Activated CD4-positive, alpha-beta T cell treated with anti-CD3 and anti-CD28 coated beads, Interleukin-2, amount 10 ng/mL, durations not matched to agents 7 days and 5 days (primary cell): ENCODE measurements at regions of chr1 and their contacts with region 1.

Region 1: GRCh38 chr1:26233903-26234643 is at the start of gene CEP85:
- DNase-seq: peak; percentile 98
- H3K4me3 Mint-ChIP-seq: peak within 1 kb of the TSS; percentile 92
- H3K27ac Mint-ChIP-seq: peak within 1 kb of the TSS; percentile 97
- H3K4me1 Mint-ChIP-seq: peaks cover 36% of the 10 kb centered on the region
- H3K27me3 Mint-ChIP-seq: no peaks in the 10 kb centered on the region
- total RNA-seq, gene CEP85: 46.9 to 49.0 TPM

Region 2: DNA sequence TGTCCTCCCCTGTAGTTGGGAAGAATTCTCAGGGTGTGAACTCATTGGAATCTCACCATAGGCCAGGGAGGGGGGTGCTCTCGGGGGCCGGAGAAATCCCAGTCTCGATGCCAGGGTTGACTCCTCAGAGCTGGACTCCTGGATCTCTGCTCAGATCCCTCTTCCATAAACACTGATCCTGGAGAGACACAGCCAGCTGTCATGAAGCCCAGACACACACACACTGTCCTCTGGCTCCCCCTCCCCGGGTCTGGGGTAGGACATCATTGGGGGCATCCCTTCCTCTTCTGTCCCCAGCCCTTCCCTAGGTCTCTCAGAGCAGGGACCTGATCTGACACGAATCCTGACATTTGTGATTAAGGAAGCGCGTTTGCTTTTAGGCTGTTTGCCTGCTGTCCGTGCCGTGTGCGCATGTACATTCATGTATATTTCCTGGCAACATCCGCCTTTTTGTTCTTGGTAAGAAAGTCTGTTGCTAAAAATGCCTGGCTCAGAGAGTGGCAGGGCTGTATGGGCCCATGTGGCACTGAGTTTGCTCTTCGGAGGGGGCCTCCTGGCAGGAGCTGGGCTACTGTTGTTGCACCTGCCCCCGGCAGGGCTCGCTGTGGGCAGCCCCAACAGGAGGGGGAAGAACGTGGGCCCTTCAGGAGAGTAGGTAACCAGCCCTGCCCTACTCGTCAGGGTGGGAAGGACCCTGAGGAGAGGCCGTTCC is 479.4 kb before region 1 on chr1:
- CTCF ChIA-PET with region 1: no interaction called
- POLR2A ChIA-PET with region 1: no interaction called
- DNase-seq: no peak
- H3K4me3 Mint-ChIP-seq: no peak overlapping the region
- H3K27ac Mint-ChIP-seq: peak overlapping the region; percentile 75
- H3K4me1 Mint-ChIP-seq: peaks cover 35% of the 10 kb centered on the region
- H3K27me3 Mint-ChIP-seq: no peaks in the 10 kb centered on the region

Region 3: GRCh38 chr1:26102526-26102925 is 131.5 kb before region 1 on chr1:
- CTCF ChIA-PET with region 1: interaction called, 10 read pairs
- POLR2A ChIA-PET with region 1: no interaction called
- DNase-seq: no peak
- H3K4me3 Mint-ChIP-seq: no peak overlapping the region
- H3K27ac Mint-ChIP-seq: no peak overlapping the region
- H3K4me1 Mint-ChIP-seq: peaks cover 18% of the 10 kb centered on the region
- H3K27me3 Mint-ChIP-seq: peaks cover 11% of the 10 kb centered on the region

Region 4: DNA sequence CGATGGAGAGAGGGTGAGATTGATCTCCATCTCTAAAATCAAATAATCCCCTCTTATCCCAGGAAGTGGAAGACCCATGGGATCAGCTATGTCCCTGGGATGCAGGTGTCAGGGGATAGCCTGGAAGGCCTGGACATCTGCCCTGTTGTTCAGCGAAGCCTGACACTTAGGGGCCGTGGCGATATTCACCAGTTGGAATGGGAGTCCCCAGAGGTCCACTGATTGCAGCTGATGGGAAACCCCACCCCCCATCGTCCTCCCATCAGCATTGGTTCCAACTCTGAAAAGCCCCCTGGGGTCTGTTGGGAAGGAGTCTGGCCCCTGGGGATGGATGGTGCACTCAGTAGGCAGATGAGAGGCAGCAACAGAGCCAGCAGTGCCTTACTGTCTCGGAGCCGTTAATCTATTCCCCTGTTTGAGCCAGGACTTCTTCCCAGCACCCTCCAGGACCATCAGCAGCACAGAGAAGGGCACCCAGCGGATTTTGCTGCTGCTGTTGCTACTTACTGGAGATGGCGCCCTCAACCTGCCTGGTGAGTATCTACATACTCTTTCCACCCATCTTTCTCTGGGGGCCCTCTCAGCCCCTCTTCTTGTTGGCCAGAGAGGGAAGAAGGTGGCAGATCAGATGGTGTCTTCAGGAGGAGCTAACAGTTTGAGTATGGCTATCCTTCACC is 30.3 kb before region 1 on chr1:
- CTCF ChIA-PET with region 1: interaction called, 31 read pairs
- POLR2A ChIA-PET with region 1: no interaction called
- DNase-seq: no peak
- H3K4me3 Mint-ChIP-seq: no peak overlapping the region
- H3K27ac Mint-ChIP-seq: peak overlapping the region; percentile 84
- H3K4me1 Mint-ChIP-seq: peaks cover 38% of the 10 kb centered on the region
- H3K27me3 Mint-ChIP-seq: no peaks in the 10 kb centered on the region

Region 5: GRCh38 chr1:26218906-26219494 is 15.1 kb before region 1 on chr1:
- CTCF ChIA-PET with region 1: interaction called, 31 read pairs
- POLR2A ChIA-PET with region 1: no interaction called
- DNase-seq: no peak
- H3K4me3 Mint-ChIP-seq: no peak overlapping the region
- H3K27ac Mint-ChIP-seq: no peak overlapping the region
- H3K4me1 Mint-ChIP-seq: no peaks in the 10 kb centered on the region
- H3K27me3 Mint-ChIP-seq: peaks cover 12% of the 10 kb centered on the region

Region 6: DNA sequence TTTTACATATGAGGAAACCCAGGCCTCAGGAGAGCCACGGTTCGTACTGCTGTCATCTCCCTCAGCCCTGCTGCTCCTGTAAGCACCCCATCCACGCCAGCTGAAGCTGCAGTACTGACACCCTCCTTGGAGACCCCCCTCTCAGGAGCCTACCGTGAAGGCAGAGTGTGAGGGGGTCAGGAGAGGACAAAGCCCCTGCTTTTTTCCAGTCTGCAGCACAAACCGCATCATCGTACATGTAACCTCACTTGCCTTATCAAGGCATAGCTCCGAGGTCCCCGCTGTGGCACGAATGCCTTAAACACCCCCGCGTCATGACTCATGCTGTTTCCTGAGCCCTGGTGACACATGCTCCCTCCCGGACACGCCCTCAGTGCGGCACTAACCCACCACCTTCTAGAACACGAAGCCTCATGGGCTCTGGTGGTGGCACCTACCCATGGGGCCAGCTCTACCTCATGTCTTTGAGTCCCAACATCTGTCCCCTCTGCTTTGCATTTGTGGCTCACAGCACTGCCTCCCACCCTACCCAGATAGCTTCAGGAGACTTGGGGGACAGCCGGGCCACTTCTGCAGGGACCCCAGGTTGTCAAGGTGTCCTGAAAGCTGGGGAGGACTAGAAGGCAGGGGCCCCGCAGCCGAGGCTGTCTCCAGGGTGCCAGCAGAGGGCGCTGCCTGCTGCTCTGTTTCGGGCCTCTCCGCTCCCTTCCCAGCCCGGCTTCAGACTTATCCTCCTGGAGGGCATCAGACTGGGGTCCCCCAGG is 50.7 kb after region 1 on chr1:
- CTCF ChIA-PET with region 1: interaction called, 25 read pairs
- POLR2A ChIA-PET with region 1: no interaction called
- DNase-seq: peak; percentile 96
- H3K4me3 Mint-ChIP-seq: peak overlapping the region; percentile 73
- H3K27ac Mint-ChIP-seq: peak overlapping the region; percentile 97
- H3K4me1 Mint-ChIP-seq: peaks cover 90% of the 10 kb centered on the region
- H3K27me3 Mint-ChIP-seq: no peaks in the 10 kb centered on the region

Region 7: DNA sequence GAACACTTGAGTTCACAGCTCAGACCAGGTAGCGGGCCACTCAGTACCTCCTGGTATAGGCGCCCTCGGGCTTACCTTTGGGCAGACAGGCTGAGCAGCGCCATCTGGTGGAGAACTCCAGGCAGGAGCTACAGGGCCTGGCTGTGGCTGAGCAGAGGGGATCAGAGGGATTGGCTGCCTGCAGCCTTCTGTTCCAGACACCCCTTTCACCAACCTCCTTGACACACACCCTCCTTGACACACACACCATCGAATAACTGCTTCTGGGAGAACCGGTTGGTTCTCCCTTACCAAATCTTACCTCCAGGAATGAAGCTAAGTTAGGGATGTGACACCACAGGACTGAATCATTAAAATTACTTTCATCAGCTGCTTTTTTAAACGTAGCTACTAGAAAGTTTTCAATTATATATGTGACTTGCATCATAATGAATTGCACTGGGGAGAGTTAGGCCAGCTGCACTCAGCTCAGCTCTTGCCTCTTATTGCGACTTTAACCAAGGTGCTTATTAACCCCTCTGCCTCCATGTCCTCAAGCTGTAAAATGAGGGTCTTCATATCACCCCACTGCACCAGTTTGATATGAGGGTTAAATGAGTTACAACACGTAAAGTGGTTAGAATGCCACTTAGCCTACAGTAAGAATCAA is 183.2 kb after region 1 on chr1:
- CTCF ChIA-PET with region 1: interaction called, 16 read pairs
- POLR2A ChIA-PET with region 1: no interaction called
- DNase-seq: peak; percentile 92
- H3K4me3 Mint-ChIP-seq: no peak overlapping the region
- H3K27ac Mint-ChIP-seq: no peak overlapping the region
- H3K4me1 Mint-ChIP-seq: no peaks in the 10 kb centered on the region
- H3K27me3 Mint-ChIP-seq: peaks cover 53% of the 10 kb centered on the region